Naive thymus-derived CD4-positive, alpha-beta T cell (primary cell): ENCODE measurements at regions of chr7 and their contacts with region 1.

Region 1: DNA sequence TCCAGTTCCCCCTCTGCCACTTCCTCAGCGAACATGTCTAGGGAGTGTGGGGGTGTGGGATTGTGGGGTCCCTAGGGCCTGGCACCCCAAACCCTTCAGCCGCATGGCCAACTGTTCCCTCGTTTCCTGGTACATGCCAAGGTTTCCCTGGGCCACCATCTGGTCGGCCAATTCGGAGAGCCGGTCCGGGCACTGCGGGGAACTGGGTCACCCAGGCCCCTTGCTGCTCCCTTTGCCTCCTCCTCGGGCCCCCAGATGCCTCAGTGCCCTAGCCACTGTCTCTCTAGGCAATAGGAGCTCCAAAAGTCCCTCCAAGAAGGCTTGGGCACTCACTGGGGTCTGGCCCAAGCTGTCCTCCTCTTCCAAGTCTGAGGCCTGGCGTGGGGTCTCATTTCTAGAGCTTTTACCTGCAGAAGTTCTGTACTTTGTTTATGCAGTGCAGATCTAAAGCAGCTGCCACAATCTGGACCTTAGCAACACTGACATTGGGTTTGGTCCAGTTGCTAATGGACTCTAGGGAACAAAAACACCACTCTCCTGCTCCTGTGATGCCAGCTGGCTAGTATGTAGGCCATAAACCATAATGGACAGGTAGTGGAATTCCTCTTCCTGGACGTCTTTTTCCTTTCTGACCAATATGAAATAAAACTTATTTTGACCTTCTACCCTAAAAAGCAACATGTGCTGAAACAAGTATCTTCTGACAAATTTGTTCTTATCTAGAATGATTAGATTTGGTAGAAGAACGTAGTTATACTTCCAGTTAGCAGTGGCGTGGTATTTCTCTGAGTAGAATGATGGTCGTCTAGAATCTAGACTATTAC is 172.9 kb downstream of the LRRC4 start:
- DNase-seq: no peak
- ATAC-seq: no peak
- H3K4me3 ChIP-seq: no peak overlapping the region
- H3K4me3 Mint-ChIP-seq: peak overlapping the region in 4 of 10 donors; percentile 7 to 42 (median 40)
- H3K27ac ChIP-seq: no peak overlapping the region
- H3K27ac Mint-ChIP-seq: peak overlapping the region in 1 of 9 donors; percentile 75
- H3K4me1 ChIP-seq: peaks cover 25 to 37% of the 10 kb centered on the region in 2 donors
- H3K4me1 Mint-ChIP-seq: peaks cover 22 to 59% (median 49%) of the 10 kb centered on the region in 7 donors
- H3K27me3 ChIP-seq: no peaks in the 10 kb centered on the region
- H3K27me3 Mint-ChIP-seq: peaks cover 5 to 40% (median 18%) of the 10 kb centered on the region in 5 donors

Region 2: DNA sequence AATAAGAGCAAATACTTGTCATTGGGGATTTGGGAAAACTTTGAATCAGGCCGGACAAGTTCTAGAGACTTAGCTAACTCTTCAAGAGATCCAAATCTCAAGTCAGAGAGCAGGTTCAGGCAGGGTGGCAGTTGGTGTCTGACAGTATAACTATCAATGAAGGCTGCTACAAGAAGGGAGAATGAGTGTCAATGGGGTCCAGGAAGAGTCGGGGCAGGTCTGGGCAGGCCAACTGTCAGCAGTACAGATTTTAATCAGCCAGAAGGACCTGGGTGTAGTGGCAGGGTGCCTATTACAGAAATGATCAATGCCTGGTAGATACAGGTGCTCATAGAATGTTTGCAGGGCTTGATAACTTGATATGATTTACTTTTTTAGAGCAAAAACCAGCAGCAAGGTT is 1356.7 kb before region 1 on chr7:
- CTCF ChIA-PET with region 1: no interaction called
- POLR2A ChIA-PET with region 1: no interaction called
- intact Hi-C with region 1: no loop called
- DNase-seq: no peak
- ATAC-seq: no peak
- H3K4me3 ChIP-seq: no peak overlapping the region
- H3K4me3 Mint-ChIP-seq: no peak overlapping the region
- H3K27ac ChIP-seq: no peak overlapping the region
- H3K27ac Mint-ChIP-seq: no peak overlapping the region
- H3K4me1 ChIP-seq: no peaks in the 10 kb centered on the region
- H3K4me1 Mint-ChIP-seq: no peaks in the 10 kb centered on the region
- H3K27me3 ChIP-seq: no peaks in the 10 kb centered on the region
- H3K27me3 Mint-ChIP-seq: no peaks in the 10 kb centered on the region

Region 3: GRCh38 chr7:127413962-127414361 is 444.3 kb before region 1 on chr7:
- CTCF ChIA-PET with region 1: no interaction called
- POLR2A ChIA-PET with region 1: no interaction called
- intact Hi-C with region 1: loop called in 1 of 2 experiments (anchors 10 kb)
- DNase-seq: peak in 7 of 9 donors; percentile 37 to 76 (median 67)
- ATAC-seq: peak; percentile 88
- H3K4me3 ChIP-seq: peak overlapping the region; percentile 5
- H3K4me3 Mint-ChIP-seq: peak overlapping the region; percentile 57 to 87 (median 74)
- H3K27ac ChIP-seq: peak overlapping the region; percentile 61
- H3K27ac Mint-ChIP-seq: peak overlapping the region; percentile 88 to 99 (median 95)
- H3K4me1 ChIP-seq: peaks cover 20 to 45% of the 10 kb centered on the region in 2 donors
- H3K4me1 Mint-ChIP-seq: peaks cover 45 to 74% (median 68%) of the 10 kb centered on the region in 7 donors
- H3K27me3 ChIP-seq: no peaks in the 10 kb centered on the region
- H3K27me3 Mint-ChIP-seq: peaks cover 0 to 14% (median 0%) of the 10 kb centered on the region in 5 donors

Region 4: GRCh38 chr7:127585044-127585953 is 273.0 kb before region 1 on chr7 and contains the start of gene GCC1:
- CTCF ChIA-PET with region 1: no interaction called
- POLR2A ChIA-PET with region 1: no interaction called
- intact Hi-C with region 1: loop called (anchors 2 to 5 kb)
- DNase-seq: peak; percentile 87 to 98 (median 93)
- ATAC-seq: peak; percentile 87
- H3K4me3 ChIP-seq: peak within 1 kb of the TSS; percentile 87
- H3K4me3 Mint-ChIP-seq: peak within 1 kb of the TSS; percentile 86 to 98 (median 92)
- H3K27ac ChIP-seq: peak within 1 kb of the TSS; percentile 88
- H3K27ac Mint-ChIP-seq: peak within 1 kb of the TSS; percentile 77 to 97 (median 94)
- H3K4me1 ChIP-seq: peaks cover 47 to 55% of the 10 kb centered on the region in 2 donors
- H3K4me1 Mint-ChIP-seq: peaks cover 55 to 88% (median 78%) of the 10 kb centered on the region in 7 donors
- H3K27me3 ChIP-seq: no peaks in the 10 kb centered on the region
- H3K27me3 Mint-ChIP-seq: no peaks in the 10 kb centered on the region
- total RNA-seq, gene GCC1: 19.6 to 31.3 (median 23.7) TPM

Region 5: GRCh38 chr7:127819975-127820731 is 38.1 kb before region 1 on chr7:
- CTCF ChIA-PET with region 1: no interaction called
- POLR2A ChIA-PET with region 1: no interaction called
- intact Hi-C with region 1: loop called in 1 of 2 experiments (anchors 5 kb)
- DNase-seq: no peak
- ATAC-seq: peak; percentile 36
- H3K4me3 ChIP-seq: no peak overlapping the region
- H3K4me3 Mint-ChIP-seq: peak overlapping the region in 1 of 10 donors; percentile 37
- H3K27ac ChIP-seq: no peak overlapping the region
- H3K27ac Mint-ChIP-seq: peak overlapping the region in 1 of 9 donors; percentile 29
- H3K4me1 ChIP-seq: peaks cover 0 to 4% of the 10 kb centered on the region in 2 donors
- H3K4me1 Mint-ChIP-seq: peaks cover 30 to 52% (median 48%) of the 10 kb centered on the region in 7 donors
- H3K27me3 ChIP-seq: no peaks in the 10 kb centered on the region
- H3K27me3 Mint-ChIP-seq: no peaks in the 10 kb centered on the region

Region 6: GRCh38 chr7:127845522-127846214 is 12.6 kb before region 1 on chr7:
- CTCF ChIA-PET with region 1: interaction called, 3 read pairs
- POLR2A ChIA-PET with region 1: no interaction called
- intact Hi-C with region 1: loop called in 1 of 2 experiments (anchors 1 kb)
- DNase-seq: no peak
- ATAC-seq: no peak
- H3K4me3 ChIP-seq: no peak overlapping the region
- H3K4me3 Mint-ChIP-seq: no peak overlapping the region
- H3K27ac ChIP-seq: no peak overlapping the region
- H3K27ac Mint-ChIP-seq: no peak overlapping the region
- H3K4me1 ChIP-seq: no peaks in the 10 kb centered on the region
- H3K4me1 Mint-ChIP-seq: peaks cover 0 to 20% (median 4%) of the 10 kb centered on the region in 7 donors
- H3K27me3 ChIP-seq: no peaks in the 10 kb centered on the region
- H3K27me3 Mint-ChIP-seq: no peaks in the 10 kb centered on the region

Region 7: DNA sequence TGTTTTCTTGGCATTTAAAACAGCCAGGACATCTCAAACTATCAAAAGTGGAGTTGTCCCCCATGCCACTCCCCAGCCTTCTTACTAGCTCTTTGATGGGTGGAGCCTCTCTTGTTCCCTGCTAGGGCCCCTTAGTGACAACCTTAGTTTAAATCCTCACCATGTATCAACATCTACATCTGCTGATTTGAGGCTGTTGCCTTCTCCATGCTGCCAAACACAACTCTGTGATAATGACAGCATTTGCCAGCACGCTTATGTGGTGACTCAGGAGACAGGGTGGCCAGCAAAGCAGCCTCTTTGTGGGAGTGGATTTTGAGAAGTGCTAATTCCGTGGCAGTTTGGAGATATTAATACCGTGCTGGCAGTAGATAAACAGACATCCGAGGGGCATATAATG is 27.5 kb after region 1 on chr7:
- CTCF ChIA-PET with region 1: no interaction called
- POLR2A ChIA-PET with region 1: no interaction called
- intact Hi-C with region 1: no loop called
- DNase-seq: no peak
- ATAC-seq: no peak
- H3K4me3 ChIP-seq: no peak overlapping the region
- H3K4me3 Mint-ChIP-seq: peak overlapping the region in 1 of 10 donors; percentile 18
- H3K27ac ChIP-seq: no peak overlapping the region
- H3K27ac Mint-ChIP-seq: no peak overlapping the region
- H3K4me1 ChIP-seq: no peaks in the 10 kb centered on the region
- H3K4me1 Mint-ChIP-seq: peaks cover 0 to 12% (median 5%) of the 10 kb centered on the region in 7 donors
- H3K27me3 ChIP-seq: no peaks in the 10 kb centered on the region
- H3K27me3 Mint-ChIP-seq: no peaks in the 10 kb centered on the region

Region 8: DNA sequence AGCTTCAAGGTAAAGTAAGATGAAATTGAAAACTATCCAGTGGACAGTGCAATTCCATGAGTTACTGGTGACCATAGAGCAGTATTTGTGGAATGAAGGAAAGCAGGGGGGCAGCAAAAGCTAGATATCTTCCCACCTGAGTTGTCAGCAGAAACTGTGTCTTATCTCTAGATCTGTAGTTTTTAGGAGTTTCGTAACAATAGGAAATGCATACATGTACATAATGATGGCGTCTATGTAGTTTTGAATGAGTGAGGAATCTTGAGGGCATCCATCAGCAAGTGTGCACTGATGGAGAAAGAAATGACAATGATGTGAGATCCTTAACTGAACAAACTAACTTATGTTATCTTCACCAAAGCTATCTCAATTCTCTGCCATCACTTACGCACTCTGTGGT is 58.4 kb after region 1 on chr7:
- CTCF ChIA-PET with region 1: no interaction called
- POLR2A ChIA-PET with region 1: no interaction called
- intact Hi-C with region 1: no loop called
- DNase-seq: no peak
- ATAC-seq: no peak
- H3K4me3 ChIP-seq: no peak overlapping the region
- H3K4me3 Mint-ChIP-seq: no peak overlapping the region
- H3K27ac ChIP-seq: no peak overlapping the region
- H3K27ac Mint-ChIP-seq: no peak overlapping the region
- H3K4me1 ChIP-seq: no peaks in the 10 kb centered on the region
- H3K4me1 Mint-ChIP-seq: peaks cover 0 to 11% (median 4%) of the 10 kb centered on the region in 7 donors
- H3K27me3 ChIP-seq: no peaks in the 10 kb centered on the region
- H3K27me3 Mint-ChIP-seq: no peaks in the 10 kb centered on the region

Region 9: DNA sequence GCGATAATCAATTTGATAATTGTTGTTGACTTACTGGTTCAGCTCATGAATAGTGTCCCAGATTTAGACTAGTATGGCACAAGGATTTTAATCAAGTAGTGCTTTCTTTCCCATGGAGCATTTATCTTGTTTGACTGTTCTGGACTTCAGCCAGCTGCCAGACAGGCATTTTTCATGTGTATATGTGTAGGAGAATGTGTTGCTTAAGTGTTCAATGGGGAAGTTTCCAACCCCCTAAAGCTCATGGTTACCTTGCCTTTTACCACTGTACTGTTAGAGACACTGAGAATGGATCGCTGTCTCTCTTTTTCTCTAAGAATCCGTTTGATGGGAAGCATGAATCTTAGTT is 69.0 kb after region 1 on chr7:
- CTCF ChIA-PET with region 1: no interaction called
- POLR2A ChIA-PET with region 1: no interaction called
- intact Hi-C with region 1: no loop called
- DNase-seq: no peak
- ATAC-seq: no peak
- H3K4me3 ChIP-seq: no peak overlapping the region
- H3K4me3 Mint-ChIP-seq: no peak overlapping the region
- H3K27ac ChIP-seq: no peak overlapping the region
- H3K27ac Mint-ChIP-seq: no peak overlapping the region
- H3K4me1 ChIP-seq: no peaks in the 10 kb centered on the region
- H3K4me1 Mint-ChIP-seq: peaks cover 0 to 16% (median 11%) of the 10 kb centered on the region in 7 donors
- H3K27me3 ChIP-seq: no peaks in the 10 kb centered on the region
- H3K27me3 Mint-ChIP-seq: no peaks in the 10 kb centered on the region

Region 10: GRCh38 chr7:128031901-128032604 is 173.8 kb after region 1 on chr7:
- CTCF ChIA-PET with region 1: no interaction called
- POLR2A ChIA-PET with region 1: no interaction called
- intact Hi-C with region 1: loop called (anchors 1 to 5 kb)
- DNase-seq: peak; percentile 29 to 63 (median 53)
- ATAC-seq: peak; percentile 92
- H3K4me3 ChIP-seq: peak overlapping the region; percentile 61
- H3K4me3 Mint-ChIP-seq: peak overlapping the region; percentile 84 to 97 (median 92)
- H3K27ac ChIP-seq: no peak overlapping the region
- H3K27ac Mint-ChIP-seq: peak overlapping the region in 3 of 9 donors; percentile 74 to 76 (median 74)
- H3K4me1 ChIP-seq: no peaks in the 10 kb centered on the region
- H3K4me1 Mint-ChIP-seq: peaks cover 6 to 36% (median 23%) of the 10 kb centered on the region in 7 donors
- H3K27me3 ChIP-seq: no peaks in the 10 kb centered on the region
- H3K27me3 Mint-ChIP-seq: peaks cover 0 to 34% (median 7%) of the 10 kb centered on the region in 5 donors

Region 11: DNA sequence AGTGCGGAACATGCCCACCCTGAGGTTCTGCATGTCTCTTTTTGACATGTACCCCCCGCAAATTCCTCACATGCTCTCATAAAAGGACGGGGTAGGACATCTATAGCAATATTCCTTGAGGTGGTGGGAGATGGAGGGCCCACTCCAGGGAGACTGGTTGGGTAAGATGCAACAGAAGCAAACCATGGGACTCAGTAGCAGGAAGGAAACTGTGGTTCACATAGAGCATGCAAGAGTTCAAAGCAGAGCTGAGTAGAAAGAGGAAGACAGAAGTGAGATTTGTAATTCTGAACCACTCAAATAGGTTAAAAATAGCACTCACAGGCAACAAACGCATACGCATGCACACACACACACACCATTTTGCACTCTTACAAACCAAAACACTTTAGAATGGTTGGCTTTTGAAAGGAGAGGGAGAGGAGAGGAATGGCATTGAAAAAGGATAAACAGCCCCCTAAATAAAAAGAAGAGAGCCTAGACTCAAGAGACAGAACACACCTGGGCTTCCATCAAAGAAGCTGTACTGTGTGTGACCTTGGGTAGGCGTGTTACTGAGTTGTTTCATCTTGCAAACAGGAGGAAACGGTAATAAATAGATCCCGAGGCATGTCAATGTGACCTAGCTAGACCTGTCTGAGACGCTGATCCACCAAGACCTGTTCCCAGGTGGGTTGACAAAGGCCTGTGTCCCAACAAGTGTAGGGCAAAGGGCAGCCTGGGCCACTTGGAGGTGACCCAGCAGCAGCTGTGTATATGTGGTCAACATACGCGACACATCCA is 250.5 kb after region 1 on chr7:
- CTCF ChIA-PET with region 1: no interaction called
- POLR2A ChIA-PET with region 1: no interaction called
- intact Hi-C with region 1: loop called (anchors 1 to 5 kb)
- DNase-seq: peak in 7 of 9 donors; percentile 49 to 83 (median 77)
- ATAC-seq: peak; percentile 90
- H3K4me3 ChIP-seq: peak overlapping the region; percentile 41
- H3K4me3 Mint-ChIP-seq: peak overlapping the region; percentile 65 to 90 (median 79)
- H3K27ac ChIP-seq: peak overlapping the region; percentile 52
- H3K27ac Mint-ChIP-seq: peak overlapping the region; percentile 51 to 94 (median 86)
- H3K4me1 ChIP-seq: peaks cover 33 to 67% of the 10 kb centered on the region in 2 donors
- H3K4me1 Mint-ChIP-seq: peaks cover 54 to 86% (median 82%) of the 10 kb centered on the region in 7 donors
- H3K27me3 ChIP-seq: no peaks in the 10 kb centered on the region
- H3K27me3 Mint-ChIP-seq: peaks cover 0 to 24% (median 0%) of the 10 kb centered on the region in 5 donors